Activated T-helper 2 cell treated with anti-CD3 and anti-CD28 coated beads, Interferon-gamma antibody, Interleukin-2, Interleukin-4, amounts not matched to agents 10 μg/mL and 5 μg/mL and 100 μg/mL, durations not matched to agents 14 hours and 24 hours and 36 hours (primary cell): ENCODE measurements at regions of chr2 and their contacts with region 1.

Region 1: GRCh38 chr2:223970343-223971128 is 13.3 kb downstream of the MRPL44 start:
- DNase-seq: no peak
- H3K4me3 Mint-ChIP-seq: no peak overlapping the region
- H3K27ac Mint-ChIP-seq: no peak overlapping the region
- H3K4me1 Mint-ChIP-seq: peaks cover 11% of the 10 kb centered on the region
- H3K27me3 Mint-ChIP-seq: no peaks in the 10 kb centered on the region

Region 2: GRCh38 chr2:224039124-224039940 is 68.8 kb after region 1 on chr2 and contains the start of gene SERPINE2:
- intact Hi-C with region 1: loop called (anchors 5 kb)
- DNase-seq: peak; percentile 39
- H3K4me3 Mint-ChIP-seq: peak within 1 kb of the TSS; percentile 91
- H3K27ac Mint-ChIP-seq: peak within 1 kb of the TSS; percentile 13
- H3K4me1 Mint-ChIP-seq: peaks cover 21% of the 10 kb centered on the region
- H3K27me3 Mint-ChIP-seq: peaks cover 53% of the 10 kb centered on the region
- total RNA-seq, gene SERPINE2: 18.3 and 19.2 TPM in 2 replicates

Region 3: DNA sequence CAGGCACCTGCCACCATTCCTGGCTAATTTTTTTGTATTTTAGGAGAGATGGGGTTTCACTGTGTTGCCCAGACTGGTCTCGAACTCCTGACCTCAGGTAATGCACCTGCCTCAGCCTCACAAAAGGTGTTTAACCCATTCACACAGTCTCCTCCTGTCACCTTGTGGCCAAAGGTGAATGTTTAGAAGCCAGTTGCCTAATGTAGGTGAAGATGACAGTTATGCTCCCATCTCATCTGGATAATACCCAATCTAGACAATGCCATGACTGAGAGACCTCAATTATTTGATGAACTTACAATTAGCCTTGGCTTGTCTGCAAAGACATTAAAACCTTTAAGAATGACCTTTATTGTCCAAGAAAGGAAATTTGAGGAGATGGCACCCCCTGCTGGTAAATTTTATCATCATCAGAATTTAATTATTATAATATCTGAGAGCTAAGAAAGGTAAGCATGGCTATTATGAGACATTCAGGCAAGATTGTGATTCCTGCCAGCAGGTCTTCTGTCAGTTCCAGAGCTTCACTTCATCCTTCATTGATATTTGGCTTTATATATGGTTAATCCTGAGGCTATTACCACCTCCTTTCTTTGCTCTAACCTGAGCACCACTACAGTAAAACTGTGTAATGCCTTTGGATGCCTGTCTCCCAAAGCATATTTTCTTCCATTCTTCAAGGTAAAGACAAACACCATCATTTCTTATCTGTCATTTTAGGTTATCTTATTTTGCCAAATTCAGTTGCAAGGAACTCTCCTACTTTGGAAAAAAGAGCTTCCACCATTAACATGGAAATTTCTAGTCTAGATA is 313.8 kb after region 1 on chr2:
- intact Hi-C with region 1: loop called (anchors 1 kb)
- DNase-seq: no peak
- H3K4me3 Mint-ChIP-seq: no peak overlapping the region
- H3K27ac Mint-ChIP-seq: no peak overlapping the region
- H3K4me1 Mint-ChIP-seq: no peaks in the 10 kb centered on the region
- H3K27me3 Mint-ChIP-seq: peaks cover 33% of the 10 kb centered on the region

Region 4: DNA sequence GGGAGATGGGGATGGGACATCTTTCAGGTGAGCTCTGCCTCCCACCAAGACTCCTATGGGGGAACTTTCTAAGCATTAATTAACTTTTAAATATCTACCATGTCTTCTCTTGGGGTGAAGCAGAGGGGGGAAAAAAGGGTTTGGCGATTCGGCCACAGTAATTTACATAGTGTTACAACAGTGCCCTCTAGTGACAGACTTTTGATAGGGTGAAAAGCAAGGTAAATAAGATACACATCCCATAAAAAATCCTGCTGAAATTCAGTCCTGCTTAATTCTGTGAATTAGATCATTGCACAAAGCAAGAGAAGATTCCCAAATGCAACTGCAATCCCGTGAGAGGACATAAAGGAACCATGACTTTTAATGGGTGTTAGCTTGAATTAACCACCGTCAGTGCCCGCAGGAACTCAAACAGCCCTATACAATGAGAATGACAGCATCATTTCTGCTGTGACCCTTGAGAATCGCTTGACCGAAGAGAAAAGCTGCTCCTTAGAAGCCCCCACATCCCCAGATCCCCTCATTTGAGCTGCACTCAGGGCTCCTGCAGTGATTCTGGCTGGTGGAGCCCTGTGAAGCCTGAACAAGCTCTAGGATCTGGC is 398.6 kb after region 1 on chr2:
- intact Hi-C with region 1: loop called (anchors 1 kb)
- DNase-seq: no peak
- H3K4me3 Mint-ChIP-seq: no peak overlapping the region
- H3K27ac Mint-ChIP-seq: no peak overlapping the region
- H3K4me1 Mint-ChIP-seq: no peaks in the 10 kb centered on the region
- H3K27me3 Mint-ChIP-seq: peaks cover 9% of the 10 kb centered on the region